ENCODE measurements at regions of chr5 and their contacts with region 1.

Region 1: DNA sequence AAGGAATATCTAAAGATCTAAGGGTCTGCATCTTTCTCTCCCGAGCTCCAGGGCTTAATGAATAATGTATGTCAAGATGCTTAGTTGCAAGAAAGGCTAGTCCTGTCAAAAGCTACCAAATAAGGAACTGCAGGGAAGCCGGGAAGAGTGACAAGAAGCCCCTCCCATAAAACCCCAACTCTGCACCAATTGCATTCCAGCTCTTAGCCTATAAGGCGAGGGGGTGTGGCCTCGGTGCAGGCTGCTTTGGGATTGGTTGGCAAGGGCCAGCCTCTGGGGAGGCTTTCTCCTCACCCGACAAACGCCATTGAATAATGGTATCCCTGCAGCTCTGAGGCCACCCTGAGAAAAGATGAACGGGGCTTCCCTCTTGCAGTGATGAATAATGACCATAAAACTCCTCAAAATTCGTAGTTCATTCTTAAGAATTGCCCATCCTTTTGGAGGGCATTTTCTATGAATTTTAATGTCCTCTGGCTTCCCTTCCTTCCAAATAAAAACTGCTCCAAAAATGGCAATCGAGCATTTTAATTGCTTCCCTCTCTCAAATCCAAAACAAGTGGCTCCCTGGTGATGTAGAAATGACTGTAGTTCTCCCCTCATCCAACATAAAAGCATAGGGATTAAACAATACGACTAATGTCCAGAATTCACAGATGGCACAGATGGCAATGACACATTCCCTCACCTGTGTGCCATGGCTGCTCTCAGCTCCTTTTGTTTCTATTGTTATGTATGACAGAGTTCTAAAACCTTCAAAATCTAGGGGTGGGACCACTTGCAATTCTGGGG is 417.1 kb downstream of the RAB3C start:
- DNase-seq: no peak
- H3K4me3 ChIP-seq: no peak overlapping the region
- H3K27ac ChIP-seq: no peak overlapping the region
- H3K4me1 ChIP-seq: no peaks in the 10 kb centered on the region
- H3K27me3 ChIP-seq: no peaks in the 10 kb centered on the region
- CTCF ChIP-seq: no peak
- POLR2A ChIP-seq: no peak

Region 2: DNA sequence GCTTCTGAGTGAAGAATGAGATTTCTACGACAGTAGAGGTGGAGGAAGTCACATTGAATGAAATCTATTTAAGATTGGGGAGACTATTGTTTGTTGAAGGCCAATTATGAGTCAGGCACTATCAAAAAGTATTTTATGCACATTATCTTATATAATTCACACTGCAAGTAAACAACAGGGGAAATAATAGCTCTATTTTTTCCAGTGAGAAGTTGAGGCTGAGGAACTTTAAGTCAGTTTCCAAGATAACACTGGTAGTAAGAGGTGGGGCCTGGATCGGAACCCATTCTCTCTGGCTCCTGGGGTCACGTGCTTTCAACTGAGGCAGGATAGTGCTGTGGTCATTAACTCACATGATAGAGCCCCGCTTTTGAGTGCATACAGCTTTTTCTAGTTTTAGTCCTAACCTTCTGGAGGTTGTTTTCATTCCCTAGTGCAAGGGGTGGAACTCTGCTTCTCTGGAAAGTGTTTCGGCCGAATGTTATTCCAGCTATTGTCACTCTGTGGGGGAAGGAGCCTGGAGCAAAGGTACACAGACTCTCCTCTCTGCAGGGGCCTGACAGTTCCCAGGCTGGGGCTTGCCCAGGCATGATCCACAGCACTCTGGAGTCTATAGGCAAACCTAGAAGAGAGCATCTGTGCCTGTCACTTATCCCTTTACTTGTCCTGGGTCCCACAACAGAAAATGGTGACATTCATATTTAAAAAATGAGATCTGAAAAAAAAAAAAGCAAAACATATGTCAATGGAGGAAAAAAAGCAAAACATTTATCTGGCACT is 1165.0 kb before region 1 on chr5:
- intact Hi-C with region 1: loop called (anchors 5 kb)
- DNase-seq: no peak
- H3K4me3 ChIP-seq: no peak overlapping the region
- H3K27ac ChIP-seq: peak overlapping the region; percentile 15 to 22
- H3K4me1 ChIP-seq: no peaks in the 10 kb centered on the region
- H3K27me3 ChIP-seq: no peaks in the 10 kb centered on the region
- CTCF ChIP-seq: no peak
- POLR2A ChIP-seq: no peak